K562 (cell line): ENCODE measurements at regions of chr16 and their contacts with region 1.

Region 1: GRCh38 chr16:28834873-28835865 is 11.0 kb downstream of the TUFM start:
- DNase-seq: no peak
- ATAC-seq: no peak
- H3K4me3 ChIP-seq: no peak overlapping the region
- H3K27ac ChIP-seq: no peak overlapping the region
- H3K4me1 ChIP-seq: peaks cover 0 to 20% of the 10 kb centered on the region in 2 experiments; a peak in 2 of 5 replicates
- H3K27me3 ChIP-seq: no peaks in the 10 kb centered on the region
- CTCF ChIP-seq: no peak
- EP300 ChIP-seq: no peak
- POLR2A ChIP-seq: peak; percentile 56; the same call in 1 of the 2 replicates
- RAD21 ChIP-seq: no peak

Region 2: DNA sequence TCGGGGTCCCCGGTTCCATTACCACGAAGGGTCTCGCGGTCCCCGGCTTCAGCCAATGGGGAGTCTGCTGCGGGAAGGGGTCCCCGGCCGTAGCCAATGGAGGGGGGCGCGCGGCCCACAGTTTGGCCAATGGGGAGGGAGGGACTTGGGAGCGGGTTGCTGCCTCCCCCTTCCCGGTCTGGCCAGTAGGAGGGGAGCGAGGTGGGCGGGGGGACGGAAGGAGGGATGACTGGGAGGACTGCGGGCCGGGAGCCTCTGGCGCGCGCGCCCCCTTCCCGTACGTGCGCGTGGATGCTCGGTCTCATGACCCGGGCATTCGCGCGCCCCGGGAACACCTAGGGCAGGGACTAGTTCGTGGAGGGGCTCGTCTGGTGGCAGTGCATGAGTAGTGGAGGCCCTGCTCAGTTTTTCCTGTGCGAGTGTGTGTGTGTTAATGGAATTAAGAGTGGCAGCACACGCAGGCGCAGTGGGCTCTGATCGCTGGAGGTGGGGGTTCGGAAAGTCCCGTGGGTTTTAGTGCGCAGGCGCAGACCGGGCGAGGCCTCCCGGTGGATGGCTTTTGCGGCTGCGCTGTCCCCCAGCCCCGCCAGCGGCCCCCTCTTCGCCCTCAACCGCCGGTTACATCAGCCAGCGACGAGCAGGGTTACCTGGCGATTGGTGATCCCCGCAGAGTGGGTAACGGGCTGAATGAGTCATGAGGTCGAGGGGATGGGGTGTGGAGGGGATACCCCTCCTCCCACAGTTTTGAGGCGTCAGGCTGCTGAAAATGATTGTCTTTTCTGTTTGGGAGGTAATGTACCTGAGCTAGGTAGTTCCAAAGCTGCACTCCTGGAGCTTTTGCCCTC is 11.1 kb before region 1 on chr16:
- CTCF ChIA-PET with region 1: no interaction called
- POLR2A ChIA-PET with region 1: interaction called, 72 read pairs
- in situ Hi-C with region 1: no loop called
- intact Hi-C with region 1: no loop called
- DNase-seq: peak; percentile 89 to 98 (median 93)
- ATAC-seq: peak; percentile 89
- H3K4me3 ChIP-seq: peak overlapping the region; percentile 99
- H3K27ac ChIP-seq: peak overlapping the region; percentile 99
- H3K4me1 ChIP-seq: peaks cover 16 to 24% of the 10 kb centered on the region in 2 experiments
- H3K27me3 ChIP-seq: no peaks in the 10 kb centered on the region
- CTCF ChIP-seq: peak; percentile 4 to 20 (median 16); a peak in 2 of 6 replicates
- EP300 ChIP-seq: peak; percentile 58
- POLR2A ChIP-seq: peak; percentile 93
- RAD21 ChIP-seq: no peak; a peak in 1 of 4 replicates